AG04450 (cell line): ENCODE measurements at regions of chr15 and their contacts with region 1.

Region 1: GRCh38 chr15:45611305-45611704 is 23.5 kb upstream of the SQOR start:
- DNase-seq: no peak
- H3K4me3 ChIP-seq: no peak overlapping the region
- H3K27ac ChIP-seq: no peak overlapping the region
- H3K27me3 ChIP-seq: no peaks in the 10 kb centered on the region
- CTCF ChIP-seq: peak; percentile 52

Region 2: GRCh38 chr15:45476410-45476809 is 134.9 kb before region 1 on chr15:
- CTCF ChIA-PET with region 1: interaction called, 18 read pairs
- POLR2A ChIA-PET with region 1: no interaction called
- DNase-seq: no peak
- H3K4me3 ChIP-seq: no peak overlapping the region
- H3K27ac ChIP-seq: no peak overlapping the region
- H3K27me3 ChIP-seq: peaks cover 3% of the 10 kb centered on the region
- CTCF ChIP-seq: no peak

Region 3: GRCh38 chr15:45587095-45587860 is 24.0 kb before region 1 on chr15 and contains the start of gene BLOC1S6:
- CTCF ChIA-PET with region 1: interaction called, 56 read pairs
- POLR2A ChIA-PET with region 1: no interaction called
- DNase-seq: peak; percentile 74
- H3K4me3 ChIP-seq: peak within 1 kb of the TSS; percentile 88
- H3K27ac ChIP-seq: peak within 1 kb of the TSS; percentile 100
- H3K27me3 ChIP-seq: no peaks in the 10 kb centered on the region
- CTCF ChIP-seq: no peak
- polyA plus RNA-seq, gene BLOC1S6: 29.9 and 39.0 TPM in 2 replicates

Region 4: DNA sequence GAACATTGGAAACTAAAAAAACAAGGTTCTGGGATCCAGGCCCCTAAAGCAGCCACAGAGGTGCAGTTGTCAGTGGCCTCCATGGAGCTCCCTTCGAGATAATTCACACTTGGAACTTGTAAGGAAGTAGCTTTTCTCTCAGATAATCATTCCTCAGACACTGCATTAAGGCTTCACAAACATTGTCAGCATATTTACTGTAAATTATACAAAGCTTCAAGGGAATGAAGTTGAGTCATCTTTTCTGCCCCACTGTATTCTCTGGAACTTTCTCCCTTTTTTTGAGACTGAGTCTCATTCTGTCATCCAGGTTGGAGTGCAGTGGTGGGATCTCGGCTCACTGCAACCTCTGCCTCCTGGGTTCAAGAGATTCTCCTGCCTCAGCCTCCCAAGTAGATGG is 17.0 kb before region 1 on chr15:
- CTCF ChIA-PET with region 1: interaction called, 56 read pairs
- POLR2A ChIA-PET with region 1: no interaction called
- DNase-seq: no peak
- H3K4me3 ChIP-seq: no peak overlapping the region
- H3K27ac ChIP-seq: peak overlapping the region; percentile 22
- H3K27me3 ChIP-seq: no peaks in the 10 kb centered on the region
- CTCF ChIP-seq: no peak

Region 5: DNA sequence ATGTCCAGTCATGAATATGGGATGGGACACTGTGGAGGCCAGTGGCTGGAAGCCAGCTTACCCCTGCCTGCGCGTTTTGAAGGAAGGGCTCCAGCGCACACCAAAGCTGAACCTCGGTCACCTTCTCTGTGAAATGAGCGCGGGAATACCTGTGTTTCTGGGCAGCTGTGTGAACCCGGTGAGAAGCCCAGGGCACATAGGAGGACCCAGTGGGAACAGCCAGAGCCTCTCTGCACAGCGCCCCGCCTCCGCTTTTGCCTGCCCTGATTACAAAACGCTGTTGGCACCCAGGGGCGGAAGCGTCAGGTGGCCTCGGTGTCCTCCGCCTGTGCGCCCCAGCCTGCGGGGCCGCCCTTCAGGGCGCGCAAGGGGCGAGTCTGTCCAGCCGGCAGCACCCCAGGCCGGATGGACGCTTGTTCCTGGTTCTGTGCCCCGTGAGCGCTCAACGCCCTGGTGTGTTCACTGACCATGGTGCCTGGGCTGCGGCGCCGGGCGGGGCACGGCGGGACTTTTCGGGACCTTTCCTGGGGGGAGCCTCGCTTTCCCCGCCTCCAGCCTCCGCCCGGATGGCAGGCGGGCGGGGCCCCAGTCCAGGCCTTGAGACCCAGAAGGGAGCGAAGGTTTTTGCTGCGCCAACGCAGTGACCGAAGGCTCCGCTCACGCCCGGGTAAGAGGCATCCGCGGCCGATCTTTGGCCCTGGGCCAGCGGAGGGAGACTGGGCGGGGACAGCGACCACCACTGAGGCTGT is 23.3 kb after region 1 on chr15 and contains the start of gene SQOR:
- CTCF ChIA-PET with region 1: interaction called, 12 read pairs
- POLR2A ChIA-PET with region 1: no interaction called
- DNase-seq: no peak
- H3K4me3 ChIP-seq: peak within 1 kb of the TSS; percentile 76
- H3K27ac ChIP-seq: peak within 1 kb of the TSS; percentile 70
- H3K27me3 ChIP-seq: no peaks in the 10 kb centered on the region
- CTCF ChIP-seq: no peak
- polyA plus RNA-seq, gene SQOR: 74.3 and 74.4 TPM in 2 replicates